Cardiac septum (tissue), 1 donor: ENCODE measurements at regions of chr18 and their contacts with region 1.

Region 1: DNA sequence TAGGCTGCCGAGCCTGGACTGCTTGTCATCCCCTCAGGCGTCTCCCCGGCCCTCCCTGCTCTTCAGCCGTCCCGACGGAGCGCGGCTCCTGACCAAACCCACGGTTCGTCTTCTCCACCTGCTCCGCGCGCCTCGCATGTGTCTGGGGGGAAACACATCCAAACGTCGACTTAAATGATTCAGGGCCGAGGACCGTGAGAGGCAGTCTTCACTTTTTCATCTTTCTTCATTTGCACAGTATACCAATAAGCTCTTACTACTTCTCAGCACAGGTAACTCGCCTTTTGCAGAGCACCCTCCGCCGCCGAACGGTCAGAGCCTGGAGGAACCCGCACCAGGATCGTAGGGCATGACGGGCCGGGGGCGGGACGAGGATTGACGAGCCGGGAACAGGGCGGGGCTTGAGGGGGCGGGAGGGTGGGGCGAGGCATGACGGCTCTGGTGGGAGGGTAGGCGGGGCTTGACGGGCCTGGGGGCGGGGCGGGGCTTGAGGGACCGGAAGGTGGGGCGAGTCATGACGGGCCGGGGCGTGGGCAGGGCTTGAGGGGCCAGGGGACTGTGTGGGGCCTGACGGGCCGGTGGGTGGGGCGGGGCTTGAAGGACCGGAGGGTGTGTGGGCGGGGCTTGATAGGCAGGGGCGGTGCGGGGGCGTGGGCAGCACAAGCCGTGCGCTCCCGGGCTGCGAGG is at the start of gene SEH1L:
- DNase-seq: peak; percentile 100
- total RNA-seq, gene SEH1L: 21.0 TPM

Region 2: DNA sequence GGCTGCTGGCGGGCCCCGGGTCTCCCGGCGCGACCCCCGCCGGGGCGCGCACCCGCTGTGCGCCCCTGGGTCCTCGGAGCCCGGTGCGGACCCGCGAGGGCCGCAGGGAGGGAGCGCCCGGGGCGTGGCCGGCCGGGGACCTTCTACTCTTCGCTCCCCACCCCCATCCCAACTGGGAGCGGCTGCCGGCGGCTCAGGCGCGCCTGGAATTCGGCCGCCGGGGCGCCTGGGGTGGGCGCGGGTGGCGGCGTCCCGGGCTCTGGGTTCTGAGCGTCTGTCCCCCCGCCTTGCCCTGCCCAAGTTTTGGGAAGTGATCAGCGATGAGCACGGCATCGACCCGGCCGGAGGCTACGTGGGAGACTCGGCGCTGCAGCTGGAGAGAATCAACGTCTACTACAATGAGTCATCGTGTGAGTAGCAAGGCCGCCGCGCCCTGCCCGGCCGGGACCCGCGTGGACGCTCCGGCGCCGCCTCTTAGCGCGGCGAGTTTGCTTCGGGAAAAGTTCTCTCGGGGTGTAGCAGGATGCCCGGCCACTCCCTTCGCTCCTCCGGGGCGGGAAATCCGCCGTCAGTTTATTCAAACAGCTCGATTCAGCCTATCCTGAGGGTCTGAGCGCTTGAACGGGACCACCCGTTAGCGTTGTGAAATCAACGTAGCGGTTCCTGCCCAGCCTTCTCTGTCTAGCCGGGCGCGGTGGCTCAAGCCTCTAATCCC is 639.0 kb before region 1 on chr18:
- intact Hi-C with region 1: loop called (anchors 10 kb)
- DNase-seq: peak; percentile 91

Region 3: GRCh38 chr18:12883684-12884405 is 63.7 kb before region 1 on chr18 and contains the start of gene PTPN2:
- intact Hi-C with region 1: loop called (anchors 5 kb)
- DNase-seq: peak; percentile 96
- total RNA-seq, gene PTPN2: 14.5 TPM